Naive thymus-derived CD8-positive, alpha-beta T cell (primary cell): ENCODE measurements at regions of chr2 and their contacts with region 1.

Region 1: GRCh38 chr2:207166039-207166348 is 246 bp upstream of the KLF7 start:
- DNase-seq: peak; percentile 85 to 99 (median 98)
- ATAC-seq: peak; percentile 83 to 86
- H3K4me3 Mint-ChIP-seq: peak overlapping the region; percentile 91 to 99 (median 96)
- H3K27ac Mint-ChIP-seq: peak overlapping the region; percentile 95 to 100 (median 98)
- H3K4me1 Mint-ChIP-seq: peaks cover 27 to 59% (median 44%) of the 10 kb centered on the region in 4 donors
- H3K27me3 Mint-ChIP-seq: no peaks in the 10 kb centered on the region

Region 2: DNA sequence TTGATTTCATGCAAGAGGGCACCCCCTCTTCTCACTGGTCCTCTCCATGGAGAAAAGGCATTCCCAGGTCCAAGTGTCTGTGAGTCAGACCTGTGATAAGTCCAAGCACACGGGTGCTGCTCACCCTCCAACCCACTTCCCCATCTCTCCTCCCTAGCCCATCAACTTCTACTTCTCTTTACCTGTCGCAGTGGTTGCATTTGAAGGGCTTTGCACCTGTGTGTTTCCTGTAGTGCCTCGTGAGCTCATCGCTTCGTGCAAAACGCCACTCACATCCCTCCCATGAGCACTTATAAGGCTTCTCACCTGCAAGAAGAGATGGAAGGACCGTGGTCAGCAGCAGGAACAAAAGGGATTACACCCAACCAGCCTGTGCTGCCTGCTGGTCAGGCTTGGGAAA is 77.7 kb before region 1 on chr2:
- POLR2A ChIA-PET with region 1: interaction called, 12 read pairs
- DNase-seq: peak in 2 of 10 donors; percentile 19 to 21
- ATAC-seq: peak; percentile 35 to 64
- H3K4me3 Mint-ChIP-seq: peak overlapping the region in 5 of 10 donors; percentile 20 to 70 (median 57)
- H3K27ac Mint-ChIP-seq: peak overlapping the region in 9 of 10 donors; percentile 24 to 89 (median 53)
- H3K4me1 Mint-ChIP-seq: peaks cover 26 to 58% (median 51%) of the 10 kb centered on the region in 4 donors
- H3K27me3 Mint-ChIP-seq: no peaks in the 10 kb centered on the region

Region 3: DNA sequence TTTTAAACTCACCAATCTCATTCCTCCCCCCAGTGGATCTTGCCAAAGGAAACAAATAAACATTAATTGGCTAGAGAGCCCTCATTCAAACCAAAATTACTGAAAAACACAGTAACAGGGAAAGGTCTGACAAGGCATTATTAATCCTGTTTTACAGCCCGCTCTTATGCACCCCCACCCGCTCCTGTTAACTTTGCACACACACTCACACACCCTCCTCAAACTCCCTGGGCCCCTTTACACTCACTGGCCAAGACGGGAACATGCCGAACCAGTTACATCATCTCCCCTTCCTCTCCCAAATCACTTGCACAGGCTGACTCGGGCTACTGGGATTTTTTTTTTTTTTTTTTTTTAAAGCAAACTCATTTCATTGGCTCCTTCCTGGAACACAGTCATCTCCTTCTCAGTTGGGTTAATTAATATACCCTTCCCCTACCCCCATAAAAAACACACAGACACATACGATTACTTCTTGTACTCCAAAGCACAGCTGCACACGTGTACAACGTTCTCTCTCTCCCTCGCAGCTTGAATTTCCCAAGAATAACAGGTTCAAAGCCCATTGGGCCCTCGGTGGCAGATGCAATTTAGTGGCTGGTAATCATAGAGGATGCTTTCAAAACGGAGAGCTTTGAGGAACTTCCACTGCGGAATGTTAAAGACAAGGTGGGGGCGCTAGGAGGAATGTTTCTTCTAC is 32.0 kb before region 1 on chr2:
- POLR2A ChIA-PET with region 1: interaction called, 399 read pairs
- DNase-seq: no peak
- ATAC-seq: no peak
- H3K4me3 Mint-ChIP-seq: peak overlapping the region in 5 of 10 donors; percentile 6 to 52 (median 33)
- H3K27ac Mint-ChIP-seq: peak overlapping the region; percentile 11 to 92 (median 76)
- H3K4me1 Mint-ChIP-seq: peaks cover 38 to 96% (median 91%) of the 10 kb centered on the region in 4 donors
- H3K27me3 Mint-ChIP-seq: no peaks in the 10 kb centered on the region

Region 4: DNA sequence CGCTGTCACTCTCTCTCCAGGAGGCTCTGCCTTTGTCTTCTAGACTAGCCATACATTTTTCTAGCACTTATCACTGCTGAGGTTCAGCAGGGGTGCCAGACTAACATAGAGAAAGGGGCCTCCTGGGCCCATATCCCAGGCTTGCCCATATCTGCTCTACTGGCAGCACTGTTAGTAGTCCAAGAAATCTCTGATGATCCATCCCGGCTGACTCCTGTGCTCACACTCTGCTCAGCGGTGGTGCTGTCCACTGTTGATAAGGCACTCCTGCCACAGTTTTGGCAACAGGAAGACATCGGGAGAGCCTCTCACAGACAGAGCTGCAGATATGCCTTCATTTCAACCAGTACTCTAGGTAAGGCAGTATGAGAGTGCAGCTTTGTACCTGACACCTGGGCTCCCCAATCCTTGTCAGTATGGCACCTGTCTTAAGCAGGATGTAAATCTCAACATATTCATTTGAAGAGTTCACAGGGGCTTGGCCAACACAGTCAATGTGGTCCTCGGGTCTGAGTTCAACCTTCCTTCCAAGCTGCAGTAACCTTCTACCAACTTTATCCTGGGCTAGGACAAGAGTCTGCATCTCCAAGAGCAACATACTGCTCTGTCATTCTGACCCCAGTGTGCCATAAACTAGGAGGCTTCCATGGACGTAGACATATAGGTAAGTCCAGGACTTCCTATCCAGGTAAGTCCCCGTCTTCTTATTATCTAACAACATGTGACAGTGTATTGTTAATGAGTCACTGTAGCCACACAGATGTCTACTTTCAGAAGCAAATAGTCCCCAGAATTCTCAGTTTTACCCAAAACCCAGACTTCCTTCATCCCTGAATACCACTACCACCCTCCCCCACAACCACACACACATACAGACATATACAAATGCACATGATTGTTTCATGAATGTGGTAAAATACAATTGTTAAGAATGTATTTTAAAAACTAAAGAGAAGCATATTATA is 16.5 kb before region 1 on chr2:
- POLR2A ChIA-PET with region 1: interaction called, 399 read pairs
- DNase-seq: no peak
- ATAC-seq: peak; percentile 25 to 28
- H3K4me3 Mint-ChIP-seq: peak overlapping the region in 7 of 10 donors; percentile 0 to 62 (median 36)
- H3K27ac Mint-ChIP-seq: peak overlapping the region in 9 of 10 donors; percentile 23 to 84 (median 66)
- H3K4me1 Mint-ChIP-seq: peaks cover 45 to 94% (median 87%) of the 10 kb centered on the region in 4 donors
- H3K27me3 Mint-ChIP-seq: no peaks in the 10 kb centered on the region

Region 5: DNA sequence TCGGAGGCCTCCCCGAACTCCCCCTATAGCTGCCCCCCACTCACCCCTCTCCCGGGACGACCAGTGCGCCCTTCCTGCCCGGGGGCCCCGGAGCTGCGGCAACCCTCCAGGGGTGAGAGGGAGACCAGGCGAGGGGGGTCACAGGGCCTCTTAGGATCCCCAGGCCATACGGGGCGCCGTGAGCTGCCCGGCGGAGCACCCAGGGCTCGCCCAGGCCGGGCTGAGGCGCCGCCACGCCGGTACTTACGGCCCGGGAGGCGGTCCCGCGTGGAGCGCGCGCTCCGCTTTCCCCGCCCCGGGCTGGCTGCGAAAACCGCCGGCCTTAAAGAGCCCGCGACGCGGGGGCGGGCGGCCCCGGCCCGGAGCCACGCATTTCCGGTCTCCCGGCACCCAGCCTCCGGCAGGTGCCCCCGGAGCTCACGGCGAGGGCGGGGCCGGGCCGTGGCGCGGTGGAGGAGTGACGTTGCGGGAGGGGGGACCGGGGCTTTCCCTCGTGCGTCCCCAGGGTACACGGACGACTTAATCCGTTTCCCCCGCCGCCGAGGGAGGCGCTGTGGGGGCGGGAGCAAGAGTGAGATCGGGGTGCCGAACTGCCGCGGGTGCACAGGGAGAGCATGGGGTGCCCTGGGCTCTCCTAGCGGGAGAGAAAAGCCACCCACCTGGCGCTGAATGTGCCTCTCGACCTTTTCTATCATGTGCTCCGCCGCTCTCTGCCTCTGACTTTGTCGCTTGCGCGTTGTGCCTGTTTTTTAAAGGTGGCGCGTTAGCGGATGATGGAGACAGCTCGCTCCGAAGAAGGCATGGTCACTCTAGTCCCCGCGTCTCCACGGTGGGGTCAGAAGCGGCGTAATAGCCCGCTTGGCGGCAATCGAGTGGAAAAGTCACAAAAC is 459.3 kb after region 1 on chr2 and contains the start of gene METTL21A:
- POLR2A ChIA-PET with region 1: interaction called, 11 read pairs
- DNase-seq: peak; percentile 89 to 96 (median 94)
- ATAC-seq: peak; percentile 73 to 79
- H3K4me3 Mint-ChIP-seq: peak within 1 kb of the TSS; percentile 83 to 96 (median 94)
- H3K27ac Mint-ChIP-seq: peak within 1 kb of the TSS; percentile 23 to 98 (median 97)
- H3K4me1 Mint-ChIP-seq: peaks cover 19 to 50% (median 46%) of the 10 kb centered on the region in 4 donors
- H3K27me3 Mint-ChIP-seq: no peaks in the 10 kb centered on the region
- polyA plus RNA-seq, gene METTL21A: 34.2 to 50.4 (median 39.4) TPM